GM12878 (cell line): ENCODE measurements at regions of chr14 and their contacts with region 1.

Region 1: DNA sequence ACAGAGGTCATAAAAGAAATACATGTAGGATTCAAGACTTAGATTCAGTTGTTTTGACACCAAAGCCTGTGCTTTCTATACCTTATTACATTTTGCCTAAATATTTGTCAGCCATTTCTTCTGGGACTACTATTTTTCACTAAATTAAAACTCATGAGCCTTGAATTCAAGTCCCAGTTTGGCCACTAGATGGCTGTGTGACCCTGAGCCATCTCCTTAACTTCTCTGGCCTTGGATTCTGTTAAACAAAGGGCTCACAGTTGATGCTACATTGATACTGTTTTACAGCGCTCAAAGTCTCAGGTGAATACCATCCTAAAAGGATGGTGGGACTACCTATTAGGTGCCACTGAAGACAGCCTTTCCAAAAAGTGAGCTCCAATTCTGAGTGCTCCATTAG is 39.6 kb upstream of the CCDC198 start:
- DNase-seq: peak; percentile 31
- ATAC-seq: peak; percentile 86
- H3K4me3 ChIP-seq: no peak overlapping the region
- H3K27ac ChIP-seq: no peak overlapping the region
- H3K4me1 ChIP-seq: no peaks in the 10 kb centered on the region
- H3K27me3 ChIP-seq: no peaks in the 10 kb centered on the region
- CTCF ChIP-seq: peak; percentile 43 to 59 (median 51)
- EP300 ChIP-seq: no peak
- POLR2A ChIP-seq: no peak
- RAD21 ChIP-seq: peak; percentile 41; the same call in 1 of the 2 replicates

Region 2: GRCh38 chr14:57435923-57436322 is 97.3 kb before region 1 on chr14:
- CTCF ChIA-PET with region 1: no interaction called
- POLR2A ChIA-PET with region 1: no interaction called
- RAD21 ChIA-PET with region 1: no interaction called
- SMC1A ChIA-PET with region 1: no interaction called
- in situ Hi-C with region 1: no loop called
- intact Hi-C with region 1: no loop called
- DNase-seq: no peak
- ATAC-seq: no peak
- H3K4me3 ChIP-seq: no peak overlapping the region
- H3K27ac ChIP-seq: no peak overlapping the region
- H3K4me1 ChIP-seq: no peaks in the 10 kb centered on the region
- H3K27me3 ChIP-seq: no peaks in the 10 kb centered on the region
- CTCF ChIP-seq: no peak
- EP300 ChIP-seq: no peak
- POLR2A ChIP-seq: no peak
- RAD21 ChIP-seq: no peak

Region 3: GRCh38 chr14:57493467-57494181 is 39.6 kb before region 1 on chr14 and contains the start of gene CCDC198:
- CTCF ChIA-PET with region 1: interaction called, 16 read pairs
- POLR2A ChIA-PET with region 1: no interaction called
- RAD21 ChIA-PET with region 1: interaction called, 5 read pairs
- SMC1A ChIA-PET with region 1: interaction called, 4 read pairs
- in situ Hi-C with region 1: no loop called
- intact Hi-C with region 1: loop called (anchors 2 kb)
- DNase-seq: peak; percentile 65
- ATAC-seq: peak; percentile 76
- H3K4me3 ChIP-seq: no peak within 1 kb of the TSS
- H3K27ac ChIP-seq: no peak within 1 kb of the TSS
- H3K4me1 ChIP-seq: no peaks in the 10 kb centered on the region
- H3K27me3 ChIP-seq: no peaks in the 10 kb centered on the region
- CTCF ChIP-seq: no peak
- EP300 ChIP-seq: no peak
- POLR2A ChIP-seq: no peak
- RAD21 ChIP-seq: no peak
- polyA plus RNA-seq, gene CCDC198: 1.3 to 1.9 TPM

Region 4: DNA sequence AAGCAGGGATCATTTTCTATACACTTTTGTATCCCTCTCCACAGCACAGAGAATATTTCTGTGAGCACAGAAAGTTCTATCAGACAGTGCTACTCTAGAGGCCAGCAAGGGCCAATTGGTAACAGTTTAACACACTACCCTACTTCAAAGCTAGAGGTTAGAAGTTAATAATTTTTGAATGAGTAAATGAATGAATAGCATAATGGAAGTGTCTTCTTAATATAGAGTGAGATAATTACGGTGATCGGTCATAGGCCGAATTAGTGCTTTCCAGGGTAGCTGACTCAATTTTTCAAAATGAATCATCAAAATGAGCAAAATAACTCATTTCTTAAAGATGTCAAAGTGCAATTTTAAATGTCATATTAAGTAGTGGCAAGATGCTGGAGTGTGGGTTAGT is 27.5 kb after region 1 on chr14:
- CTCF ChIA-PET with region 1: interaction called, 12 read pairs
- POLR2A ChIA-PET with region 1: no interaction called
- RAD21 ChIA-PET with region 1: no interaction called
- SMC1A ChIA-PET with region 1: interaction called, 5 read pairs
- in situ Hi-C with region 1: no loop called
- intact Hi-C with region 1: no loop called
- DNase-seq: peak; percentile 38
- ATAC-seq: peak; percentile 90
- H3K4me3 ChIP-seq: no peak overlapping the region
- H3K27ac ChIP-seq: no peak overlapping the region
- H3K4me1 ChIP-seq: no peaks in the 10 kb centered on the region
- H3K27me3 ChIP-seq: no peaks in the 10 kb centered on the region
- CTCF ChIP-seq: no peak
- EP300 ChIP-seq: peak in 1 of 2 experiments; percentile 80; a peak in 2 of 4 replicates
- POLR2A ChIP-seq: no peak
- RAD21 ChIP-seq: no peak

Region 5: DNA sequence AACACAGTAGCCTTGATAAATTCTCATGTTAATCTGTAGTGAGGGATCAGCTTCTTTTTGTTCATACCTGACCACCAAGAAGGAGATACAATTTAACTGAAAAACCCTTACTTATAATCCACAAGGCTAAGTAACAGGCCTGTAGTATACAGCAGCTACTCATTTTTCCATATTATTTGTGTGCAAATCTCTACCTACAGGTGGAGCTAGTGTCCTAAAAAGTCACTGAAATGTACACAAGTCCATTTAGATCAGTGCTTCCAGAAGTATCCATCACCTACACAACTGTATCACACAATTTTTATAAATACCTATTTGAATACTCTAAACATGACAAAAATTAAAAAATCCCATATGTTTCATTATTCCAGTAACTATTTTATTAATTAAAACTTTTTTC is 159.5 kb after region 1 on chr14:
- CTCF ChIA-PET with region 1: interaction called, 5 read pairs
- POLR2A ChIA-PET with region 1: no interaction called
- RAD21 ChIA-PET with region 1: no interaction called
- SMC1A ChIA-PET with region 1: no interaction called
- in situ Hi-C with region 1: no loop called
- intact Hi-C with region 1: loop called (anchors 10 kb)
- DNase-seq: no peak
- ATAC-seq: peak; percentile 61
- H3K4me3 ChIP-seq: no peak overlapping the region
- H3K27ac ChIP-seq: no peak overlapping the region
- H3K4me1 ChIP-seq: no peaks in the 10 kb centered on the region
- H3K27me3 ChIP-seq: no peaks in the 10 kb centered on the region
- CTCF ChIP-seq: peak; percentile 33 to 40 (median 35); a peak in 4 of 6 replicates
- EP300 ChIP-seq: no peak
- POLR2A ChIP-seq: no peak
- RAD21 ChIP-seq: peak; percentile 56; the same call in 1 of the 2 replicates

Region 6: DNA sequence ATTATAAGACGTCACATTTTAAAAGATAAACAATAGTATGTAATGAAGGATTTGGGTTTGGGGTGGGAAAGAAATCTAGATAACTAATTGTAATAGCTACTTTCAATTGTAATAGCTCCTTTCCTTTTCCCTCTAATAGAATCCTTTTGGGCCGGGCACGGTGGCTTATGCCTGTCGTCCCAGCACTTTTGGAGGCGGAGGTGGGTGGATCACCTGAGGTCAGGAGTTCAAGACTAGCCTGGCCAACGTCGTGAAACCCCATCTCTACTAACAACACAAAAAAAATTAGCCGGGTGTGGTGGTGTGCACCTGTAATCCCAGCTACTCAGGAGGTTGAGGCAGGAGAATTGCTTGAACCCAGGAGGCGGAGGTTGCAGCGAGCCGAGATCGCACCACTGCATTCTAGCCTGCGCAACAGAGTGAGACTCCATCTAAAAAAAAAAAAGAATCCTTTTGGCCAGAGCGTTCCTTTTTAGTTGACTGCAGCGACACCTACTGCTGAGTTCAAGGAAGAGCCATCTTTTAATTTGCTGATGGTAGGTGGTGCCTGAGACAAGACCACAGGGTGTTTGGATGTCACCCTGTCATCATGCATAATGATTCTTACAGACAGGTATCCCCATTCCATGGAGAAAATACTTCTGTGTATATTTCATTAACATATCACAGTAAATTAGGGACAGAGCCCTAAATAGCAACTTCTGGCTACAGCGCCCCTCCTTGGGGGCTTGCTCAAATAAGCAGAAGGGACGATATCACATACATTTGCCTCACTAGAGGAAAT is 539.3 kb after region 1 on chr14:
- CTCF ChIA-PET with region 1: interaction called, 4 read pairs
- POLR2A ChIA-PET with region 1: no interaction called
- RAD21 ChIA-PET with region 1: no interaction called
- SMC1A ChIA-PET with region 1: no interaction called
- in situ Hi-C with region 1: no loop called
- intact Hi-C with region 1: loop called (anchors 1 kb)
- DNase-seq: peak; percentile 13
- ATAC-seq: peak; percentile 91
- H3K4me3 ChIP-seq: no peak overlapping the region
- H3K27ac ChIP-seq: no peak overlapping the region
- H3K4me1 ChIP-seq: no peaks in the 10 kb centered on the region
- H3K27me3 ChIP-seq: no peaks in the 10 kb centered on the region
- CTCF ChIP-seq: peak; percentile 57 to 70 (median 69); a peak in 5 of 6 replicates
- EP300 ChIP-seq: no peak
- POLR2A ChIP-seq: no peak
- RAD21 ChIP-seq: peak; percentile 82